ENCODE measurements at regions of chr14 and their contacts with region 1.

Region 1: DNA sequence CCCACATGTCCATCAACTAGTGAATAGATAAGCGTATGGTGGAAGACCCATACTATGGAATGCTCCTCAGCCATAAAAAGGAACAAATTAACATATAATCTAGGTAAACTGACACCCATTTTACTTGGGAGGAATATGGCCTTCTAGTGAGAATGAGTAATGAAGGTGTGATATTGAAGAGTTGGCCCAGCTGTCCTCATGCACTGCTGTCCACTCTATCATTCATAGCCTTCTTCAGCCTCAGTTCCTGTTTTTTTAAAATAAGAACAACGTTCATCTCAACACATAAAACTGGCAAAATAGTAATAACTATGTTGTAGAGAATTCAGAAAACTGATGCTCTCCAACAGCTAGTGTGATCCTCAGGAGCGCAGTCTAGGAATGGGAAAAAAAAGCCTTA is 26.5 kb upstream of the OXA1L start:
- DNase-seq: no peak
- ATAC-seq: no peak
- H3K4me3 ChIP-seq: no peak overlapping the region
- H3K27ac ChIP-seq: no peak overlapping the region
- H3K4me1 ChIP-seq: no peaks in the 10 kb centered on the region; a peak in 1 of 5 replicates
- H3K27me3 ChIP-seq: no peaks in the 10 kb centered on the region
- CTCF ChIP-seq: no peak
- EP300 ChIP-seq: no peak
- POLR2A ChIP-seq: no peak
- RAD21 ChIP-seq: no peak

Region 2: DNA sequence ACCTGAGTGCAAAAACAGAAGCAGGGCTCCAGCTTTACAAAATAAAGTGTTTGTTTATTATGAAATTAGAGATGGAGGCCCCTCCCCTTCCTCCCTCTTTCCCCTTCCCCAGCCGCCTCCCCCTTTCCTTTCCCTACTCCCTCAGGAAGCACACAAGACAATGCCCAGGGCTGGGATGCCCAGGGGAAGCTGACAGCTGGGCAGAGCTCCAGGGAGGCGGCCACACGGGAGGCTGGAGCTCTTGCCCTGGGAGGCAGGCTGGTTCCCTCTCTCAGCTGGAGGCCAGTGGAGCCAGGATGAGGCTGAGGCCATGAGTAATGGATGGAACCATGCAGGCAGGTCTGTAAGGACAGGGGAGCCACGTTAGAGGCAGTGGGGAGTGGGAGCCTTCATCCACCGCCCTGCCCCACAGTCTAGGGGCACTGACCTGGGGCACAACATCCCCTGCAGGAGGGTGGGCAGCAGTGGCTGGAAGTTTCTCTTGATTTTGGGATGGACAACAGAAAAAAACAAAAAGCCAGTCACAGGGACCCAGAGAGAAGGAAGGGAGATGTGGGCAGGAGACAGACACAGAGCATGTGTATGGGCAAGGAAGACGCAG is 307.1 kb after region 1 on chr14:
- CTCF ChIA-PET with region 1: no interaction called
- POLR2A ChIA-PET with region 1: no interaction called
- in situ Hi-C with region 1: no loop called
- intact Hi-C with region 1: no loop called
- DNase-seq: no peak
- ATAC-seq: no peak
- H3K4me3 ChIP-seq: no peak overlapping the region
- H3K27ac ChIP-seq: no peak overlapping the region
- H3K4me1 ChIP-seq: peaks cover 15 to 33% of the 10 kb centered on the region in 2 experiments
- H3K27me3 ChIP-seq: no peaks in the 10 kb centered on the region
- CTCF ChIP-seq: no peak
- EP300 ChIP-seq: no peak
- POLR2A ChIP-seq: no peak
- RAD21 ChIP-seq: no peak

Region 3: DNA sequence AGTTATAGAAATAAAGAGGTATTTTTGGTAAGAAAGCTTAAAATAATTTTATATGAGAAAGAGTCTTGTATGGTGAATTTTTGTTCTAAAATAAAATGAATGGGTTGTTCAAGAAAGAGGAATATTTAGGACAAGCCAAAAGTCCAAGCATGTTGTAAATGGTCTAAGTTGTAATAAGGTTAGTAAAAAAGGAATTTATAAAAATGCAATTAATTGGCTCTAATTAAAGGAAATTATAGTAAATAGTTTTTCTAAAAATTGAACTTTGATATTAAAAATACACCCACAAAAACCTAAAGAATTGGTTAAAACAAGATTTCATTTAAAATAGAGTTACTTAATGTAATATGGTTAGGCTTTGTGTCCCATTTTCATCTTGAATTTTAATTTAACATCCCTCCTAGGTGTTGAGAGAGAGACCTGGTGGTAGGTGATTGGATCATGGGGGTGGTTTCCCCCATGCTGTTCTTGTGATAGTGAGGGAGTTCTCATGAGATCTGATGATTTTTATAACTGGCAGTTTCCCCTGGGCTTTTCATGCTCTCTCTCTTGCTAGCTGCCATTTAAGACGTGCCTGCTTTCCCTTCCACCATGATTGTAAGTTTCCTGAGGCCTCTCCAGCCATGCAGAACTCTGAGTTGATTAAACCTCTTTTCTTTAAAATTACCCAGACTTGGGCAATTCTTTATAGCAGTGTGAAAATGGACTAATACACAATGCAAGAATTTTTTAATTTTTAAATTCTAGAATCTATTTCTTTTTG is 599.7 kb after region 1 on chr14:
- CTCF ChIA-PET with region 1: no interaction called
- POLR2A ChIA-PET with region 1: no interaction called
- in situ Hi-C with region 1: loop called (anchors 5 kb)
- intact Hi-C with region 1: no loop called
- DNase-seq: no peak
- ATAC-seq: no peak
- H3K4me3 ChIP-seq: no peak overlapping the region
- H3K27ac ChIP-seq: no peak overlapping the region
- H3K4me1 ChIP-seq: no peaks in the 10 kb centered on the region; a peak in 2 of 5 replicates
- H3K27me3 ChIP-seq: peaks cover 0 to 2% of the 10 kb centered on the region in 2 experiments; a peak in 1 of 5 replicates
- CTCF ChIP-seq: no peak
- EP300 ChIP-seq: no peak
- POLR2A ChIP-seq: no peak
- RAD21 ChIP-seq: no peak